Psoas muscle (tissue), 8 donors: ENCODE measurements at regions of chr12 and their contacts with region 1.

Region 1: GRCh38 chr12:28958553-28959195 is 190.4 kb upstream of the FAR2 start:
- DNase-seq: no peak
- ATAC-seq: no peak
- H3K4me3 ChIP-seq: no peak overlapping the region
- H3K27ac ChIP-seq: no peak overlapping the region
- H3K4me1 ChIP-seq: no peaks in the 10 kb centered on the region
- H3K27me3 ChIP-seq: no peaks in the 10 kb centered on the region
- CTCF ChIP-seq: no peak

Region 2: GRCh38 chr12:28535216-28535615 is 423.5 kb before region 1 on chr12:
- intact Hi-C with region 1: loop called in 1 of 2 experiments (anchors 5 kb)
- DNase-seq: no peak
- ATAC-seq: no peak
- H3K4me3 ChIP-seq: no peak overlapping the region
- H3K27ac ChIP-seq: no peak overlapping the region
- H3K4me1 ChIP-seq: no peaks in the 10 kb centered on the region
- H3K27me3 ChIP-seq: no peaks in the 10 kb centered on the region
- CTCF ChIP-seq: no peak

Region 3: DNA sequence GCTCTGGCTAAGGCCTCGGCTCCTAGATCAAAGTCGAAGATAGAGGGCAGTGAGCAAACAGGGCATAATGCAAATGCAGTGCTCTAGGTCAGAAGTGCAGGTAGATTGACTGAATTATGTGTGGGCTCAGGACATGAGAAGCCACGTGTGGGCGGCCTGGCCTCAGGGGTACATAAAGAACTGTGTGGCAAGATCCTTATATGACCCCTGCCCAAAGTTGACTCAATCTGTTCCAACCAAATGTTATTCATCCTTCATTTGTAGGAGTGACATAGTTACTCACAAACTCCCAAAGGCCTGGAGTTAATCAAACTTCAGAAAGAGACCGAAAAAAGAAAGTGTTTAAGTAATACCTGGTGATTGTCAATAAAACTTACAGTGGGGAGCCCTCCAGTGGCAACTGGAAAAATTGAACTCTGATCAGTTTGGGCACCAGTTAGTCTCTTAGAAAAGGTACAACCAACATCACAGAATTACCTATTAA is 40.0 kb after region 1 on chr12:
- intact Hi-C with region 1: no loop called
- DNase-seq: no peak
- ATAC-seq: no peak
- H3K4me3 ChIP-seq: no peak overlapping the region
- H3K27ac ChIP-seq: no peak overlapping the region
- H3K4me1 ChIP-seq: no peaks in the 10 kb centered on the region
- H3K27me3 ChIP-seq: no peaks in the 10 kb centered on the region
- CTCF ChIP-seq: peak; percentile 32